Activated CD4-positive, alpha-beta T cell treated with anti-CD3 and anti-CD28 coated beads, Interleukin-2, amount 10 ng/mL, durations not matched to agents 24 days and 14 days (primary cell): ENCODE measurements at regions of chr9 and their contacts with region 1.

Region 1: GRCh38 chr9:2241836-2242741 is 226.9 kb downstream of the SMARCA2 start:
- DNase-seq: peak; percentile 91
- H3K4me3 Mint-ChIP-seq: peak overlapping the region; percentile 83
- H3K27ac Mint-ChIP-seq: peak overlapping the region; percentile 80
- H3K4me1 Mint-ChIP-seq: peaks cover 12% of the 10 kb centered on the region
- H3K27me3 Mint-ChIP-seq: peaks cover 29% of the 10 kb centered on the region

Region 2: DNA sequence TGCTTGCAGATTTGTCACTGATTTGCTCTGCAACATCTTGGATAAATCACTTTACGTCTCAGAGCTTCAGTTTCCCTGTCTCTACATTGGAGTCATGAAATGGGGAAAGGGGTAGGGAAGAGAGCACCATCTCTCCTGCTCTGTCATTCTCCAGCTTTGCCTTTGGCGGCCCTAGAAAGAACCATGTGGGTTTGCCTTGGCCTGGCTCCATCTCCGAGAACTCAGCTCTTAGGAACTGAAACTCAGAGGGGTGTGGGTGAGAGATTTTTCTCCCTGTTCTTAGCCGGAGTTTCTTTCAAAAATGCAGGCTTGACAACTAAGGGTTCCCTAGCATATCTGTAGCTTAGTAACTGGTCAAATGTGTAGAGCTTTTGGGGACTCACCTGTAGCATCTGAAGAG is 103.4 kb before region 1 on chr9:
- intact Hi-C with region 1: loop called (anchors 5 kb)
- DNase-seq: no peak
- H3K4me3 Mint-ChIP-seq: no peak overlapping the region
- H3K27ac Mint-ChIP-seq: no peak overlapping the region
- H3K4me1 Mint-ChIP-seq: peaks cover 4% of the 10 kb centered on the region
- H3K27me3 Mint-ChIP-seq: no peaks in the 10 kb centered on the region

Region 3: GRCh38 chr9:2216591-2216990 is 25.5 kb before region 1 on chr9:
- intact Hi-C with region 1: no loop called
- DNase-seq: no peak
- H3K4me3 Mint-ChIP-seq: no peak overlapping the region
- H3K27ac Mint-ChIP-seq: no peak overlapping the region
- H3K4me1 Mint-ChIP-seq: no peaks in the 10 kb centered on the region
- H3K27me3 Mint-ChIP-seq: no peaks in the 10 kb centered on the region

Region 4: GRCh38 chr9:2403701-2404100 is 161.6 kb after region 1 on chr9:
- intact Hi-C with region 1: no loop called
- DNase-seq: no peak
- H3K4me3 Mint-ChIP-seq: no peak overlapping the region
- H3K27ac Mint-ChIP-seq: no peak overlapping the region
- H3K4me1 Mint-ChIP-seq: no peaks in the 10 kb centered on the region
- H3K27me3 Mint-ChIP-seq: no peaks in the 10 kb centered on the region

Region 5: GRCh38 chr9:2936221-2936620 is 694.1 kb after region 1 on chr9:
- intact Hi-C with region 1: no loop called
- DNase-seq: no peak
- H3K4me3 Mint-ChIP-seq: no peak overlapping the region
- H3K27ac Mint-ChIP-seq: no peak overlapping the region
- H3K4me1 Mint-ChIP-seq: no peaks in the 10 kb centered on the region
- H3K27me3 Mint-ChIP-seq: no peaks in the 10 kb centered on the region